Caco-2 (cell line): ENCODE measurements at regions of chr17 and their contacts with region 1.

Region 1: GRCh38 chr17:74987418-74987908 is at the start of gene CDR2L:
- DNase-seq: peak; percentile 95 to 98
- H3K4me3 ChIP-seq: peak within 1 kb of the TSS; percentile 70
- H3K4me3 Mint-ChIP-seq: peak within 1 kb of the TSS; percentile 81
- H3K27ac Mint-ChIP-seq: peak within 1 kb of the TSS; percentile 53
- H3K4me1 ChIP-seq: peaks cover 37% of the 10 kb centered on the region
- H3K4me1 Mint-ChIP-seq: peaks cover 23% of the 10 kb centered on the region
- H3K27me3 ChIP-seq: no peaks in the 10 kb centered on the region
- H3K27me3 Mint-ChIP-seq: no peaks in the 10 kb centered on the region
- CTCF ChIP-seq: no peak
- total RNA-seq, gene CDR2L: 30.9 and 31.6 TPM in 2 replicates

Region 2: GRCh38 chr17:74892974-74893911 is 94.2 kb before region 1 on chr17 and contains the start of gene FADS6:
- CTCF ChIA-PET with region 1: no interaction called
- POLR2A ChIA-PET with region 1: no interaction called
- intact Hi-C with region 1: no loop called
- DNase-seq: peak in 1 of 2 experiments; percentile 57
- H3K4me3 ChIP-seq: peak within 1 kb of the TSS; percentile 58
- H3K4me3 Mint-ChIP-seq: peak within 1 kb of the TSS; percentile 73
- H3K27ac Mint-ChIP-seq: no peak within 1 kb of the TSS
- H3K4me1 ChIP-seq: peaks cover 5% of the 10 kb centered on the region; the same call in 1 of the 2 replicates
- H3K4me1 Mint-ChIP-seq: peaks cover 9% of the 10 kb centered on the region
- H3K27me3 ChIP-seq: no peaks in the 10 kb centered on the region
- H3K27me3 Mint-ChIP-seq: peaks cover 6% of the 10 kb centered on the region
- CTCF ChIP-seq: no peak
- total RNA-seq, gene FADS6: 2.6 and 3.1 TPM in 2 replicates

Region 3: DNA sequence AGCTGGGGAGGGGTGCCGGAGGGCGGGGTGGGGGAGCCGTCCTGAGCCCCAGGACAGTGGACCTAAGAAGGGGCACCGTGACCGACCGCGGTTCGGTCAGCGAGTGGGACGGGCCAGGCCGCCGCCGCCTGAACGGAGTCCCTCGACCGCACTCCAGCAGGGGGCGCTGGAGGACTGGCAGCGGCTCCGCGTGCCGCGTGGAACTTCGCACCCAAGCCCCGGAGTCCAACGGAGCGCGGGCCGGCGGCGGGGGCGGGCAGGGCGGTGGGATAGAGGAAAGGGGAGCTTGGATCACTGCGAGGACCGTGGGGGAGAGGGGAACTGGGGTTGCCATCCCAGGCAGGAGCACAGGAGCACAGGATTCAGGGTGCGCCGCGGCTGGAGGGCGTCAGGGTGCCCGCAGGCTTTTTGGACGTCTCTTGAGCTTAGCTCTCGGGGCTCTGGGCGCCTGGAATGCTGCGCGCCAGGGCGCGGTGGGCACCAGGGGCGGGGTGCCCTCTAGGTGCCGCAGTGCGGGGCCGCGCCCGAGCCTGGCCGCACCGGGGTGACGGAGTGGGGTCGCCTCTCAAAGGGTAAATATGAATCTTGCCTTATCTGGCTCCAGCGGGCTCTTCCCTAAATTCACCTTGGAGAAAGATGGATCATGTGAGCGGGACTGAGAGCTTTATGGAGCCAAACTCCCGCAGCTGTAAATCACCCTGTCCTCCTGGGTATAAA is 63.8 kb before region 1 on chr17:
- CTCF ChIA-PET with region 1: no interaction called
- POLR2A ChIA-PET with region 1: interaction called, 13 read pairs
- intact Hi-C with region 1: no loop called
- DNase-seq: peak; percentile 62 to 89
- H3K4me3 ChIP-seq: peak overlapping the region; percentile 49
- H3K4me3 Mint-ChIP-seq: peak overlapping the region; percentile 71
- H3K27ac Mint-ChIP-seq: no peak overlapping the region
- H3K4me1 ChIP-seq: peaks cover 6% of the 10 kb centered on the region; the same call in 1 of the 2 replicates
- H3K4me1 Mint-ChIP-seq: no peaks in the 10 kb centered on the region
- H3K27me3 ChIP-seq: peaks cover 1% of the 10 kb centered on the region; the same call in 1 of the 2 replicates
- H3K27me3 Mint-ChIP-seq: peaks cover 25% of the 10 kb centered on the region
- CTCF ChIP-seq: peak; percentile 88 to 97

Region 4: GRCh38 chr17:74972107-74972972 is 15.1 kb before region 1 on chr17 and contains the start of gene HID1:
- CTCF ChIA-PET with region 1: interaction called, 11 read pairs
- POLR2A ChIA-PET with region 1: interaction called, 17 read pairs
- intact Hi-C with region 1: loop called (anchors 1 kb)
- DNase-seq: peak; percentile 75 to 87
- H3K4me3 ChIP-seq: peak within 1 kb of the TSS; percentile 90
- H3K4me3 Mint-ChIP-seq: peak within 1 kb of the TSS; percentile 84
- H3K27ac Mint-ChIP-seq: no peak within 1 kb of the TSS
- H3K4me1 ChIP-seq: peaks cover 36% of the 10 kb centered on the region
- H3K4me1 Mint-ChIP-seq: peaks cover 28% of the 10 kb centered on the region
- H3K27me3 ChIP-seq: no peaks in the 10 kb centered on the region
- H3K27me3 Mint-ChIP-seq: peaks cover 2% of the 10 kb centered on the region
- CTCF ChIP-seq: no peak
- total RNA-seq, gene HID1: 29.8 and 30.4 TPM in 2 replicates

Region 5: DNA sequence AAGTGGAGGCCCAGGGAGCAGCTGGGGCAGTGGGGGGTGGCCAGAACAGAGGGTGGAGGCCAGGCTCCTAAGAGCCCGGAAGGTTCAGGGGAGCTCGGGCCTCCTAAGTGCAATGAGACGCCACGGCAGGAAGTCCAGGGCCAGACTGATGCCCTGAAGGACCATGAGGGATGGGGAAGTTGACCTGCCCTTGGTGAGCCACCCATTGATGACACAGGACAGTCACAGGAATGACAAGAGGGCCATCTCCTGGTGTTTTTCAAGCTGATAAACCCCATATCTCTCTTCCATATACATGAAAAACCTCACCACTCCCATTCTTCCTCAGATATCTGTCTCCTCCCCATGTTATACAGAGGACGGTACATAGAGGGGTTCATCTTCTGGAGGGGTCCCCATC is 19.2 kb after region 1 on chr17:
- CTCF ChIA-PET with region 1: interaction called, 28 read pairs
- POLR2A ChIA-PET with region 1: interaction called, 33 read pairs
- intact Hi-C with region 1: loop called (anchors 1 kb)
- DNase-seq: peak in 1 of 2 experiments; percentile 46
- H3K4me3 ChIP-seq: no peak overlapping the region
- H3K4me3 Mint-ChIP-seq: no peak overlapping the region
- H3K27ac Mint-ChIP-seq: no peak overlapping the region
- H3K4me1 ChIP-seq: peaks cover 3% of the 10 kb centered on the region; the same call in 1 of the 2 replicates
- H3K4me1 Mint-ChIP-seq: no peaks in the 10 kb centered on the region
- H3K27me3 ChIP-seq: no peaks in the 10 kb centered on the region
- H3K27me3 Mint-ChIP-seq: no peaks in the 10 kb centered on the region
- CTCF ChIP-seq: peak in 1 of 2 experiments; percentile 33

Region 6: DNA sequence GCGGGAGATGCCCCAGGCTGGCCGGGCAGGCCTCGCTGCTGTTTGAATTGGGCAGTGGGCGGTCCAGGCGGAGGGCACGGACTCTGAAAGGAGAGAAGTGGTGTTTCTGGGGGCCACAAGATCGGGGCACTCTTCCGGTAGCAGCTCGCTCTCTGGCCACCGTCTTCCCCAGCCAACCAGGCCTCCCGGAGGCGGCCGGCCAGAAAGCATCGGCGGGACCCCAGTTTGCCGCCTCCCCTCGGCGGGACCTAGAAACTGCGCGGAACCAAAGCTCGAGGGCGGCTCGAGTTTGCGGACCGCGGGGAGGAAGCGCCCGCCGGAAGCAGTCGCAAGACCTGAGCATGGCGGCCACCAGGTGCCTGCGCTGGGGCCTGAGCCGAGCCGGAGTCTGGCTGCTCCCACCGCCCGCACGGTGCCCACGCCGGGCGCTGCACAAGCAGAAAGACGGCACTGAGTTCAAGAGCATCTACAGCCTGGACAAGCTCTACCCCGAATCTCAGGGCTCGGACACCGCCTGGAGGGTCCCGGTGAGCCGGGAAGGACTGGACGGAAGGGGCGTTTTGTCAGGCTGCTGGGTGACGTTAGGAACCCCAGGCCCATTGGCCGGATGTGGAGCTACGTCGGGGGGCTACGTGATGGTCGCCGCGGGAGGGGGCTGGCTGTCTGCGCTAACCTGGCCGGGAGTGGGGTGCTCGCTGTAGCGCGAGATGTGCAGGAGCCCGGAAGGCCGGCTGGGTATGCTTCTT is 25.1 kb after region 1 on chr17 and contains the start of gene MRPL58:
- CTCF ChIA-PET with region 1: interaction called, 28 read pairs
- POLR2A ChIA-PET with region 1: interaction called, 33 read pairs
- intact Hi-C with region 1: loop called (anchors 2 kb)
- DNase-seq: peak; percentile 88 to 92
- H3K4me3 ChIP-seq: peak within 1 kb of the TSS; percentile 84
- H3K4me3 Mint-ChIP-seq: peak within 1 kb of the TSS; percentile 82
- H3K27ac Mint-ChIP-seq: peak within 1 kb of the TSS; percentile 84
- H3K4me1 ChIP-seq: peaks cover 3% of the 10 kb centered on the region; the same call in 1 of the 2 replicates
- H3K4me1 Mint-ChIP-seq: peaks cover 29% of the 10 kb centered on the region
- H3K27me3 ChIP-seq: no peaks in the 10 kb centered on the region
- H3K27me3 Mint-ChIP-seq: no peaks in the 10 kb centered on the region
- CTCF ChIP-seq: peak; percentile 68 to 79
- total RNA-seq, gene MRPL58: 61.0 and 61.8 TPM in 2 replicates

Region 7: GRCh38 chr17:75034236-75034908 is 46.9 kb after region 1 on chr17:
- CTCF ChIA-PET with region 1: interaction called, 4 read pairs
- POLR2A ChIA-PET with region 1: interaction called, 8 read pairs
- intact Hi-C with region 1: loop called (anchors 1 kb)
- DNase-seq: peak; percentile 95 to 96
- H3K4me3 ChIP-seq: peak overlapping the region; percentile 91
- H3K4me3 Mint-ChIP-seq: peak overlapping the region; percentile 94
- H3K27ac Mint-ChIP-seq: peak overlapping the region; percentile 98
- H3K4me1 ChIP-seq: no peaks in the 10 kb centered on the region
- H3K4me1 Mint-ChIP-seq: peaks cover 30% of the 10 kb centered on the region
- H3K27me3 ChIP-seq: no peaks in the 10 kb centered on the region
- H3K27me3 Mint-ChIP-seq: peaks cover 4% of the 10 kb centered on the region
- CTCF ChIP-seq: peak; percentile 14 to 17

Region 8: DNA sequence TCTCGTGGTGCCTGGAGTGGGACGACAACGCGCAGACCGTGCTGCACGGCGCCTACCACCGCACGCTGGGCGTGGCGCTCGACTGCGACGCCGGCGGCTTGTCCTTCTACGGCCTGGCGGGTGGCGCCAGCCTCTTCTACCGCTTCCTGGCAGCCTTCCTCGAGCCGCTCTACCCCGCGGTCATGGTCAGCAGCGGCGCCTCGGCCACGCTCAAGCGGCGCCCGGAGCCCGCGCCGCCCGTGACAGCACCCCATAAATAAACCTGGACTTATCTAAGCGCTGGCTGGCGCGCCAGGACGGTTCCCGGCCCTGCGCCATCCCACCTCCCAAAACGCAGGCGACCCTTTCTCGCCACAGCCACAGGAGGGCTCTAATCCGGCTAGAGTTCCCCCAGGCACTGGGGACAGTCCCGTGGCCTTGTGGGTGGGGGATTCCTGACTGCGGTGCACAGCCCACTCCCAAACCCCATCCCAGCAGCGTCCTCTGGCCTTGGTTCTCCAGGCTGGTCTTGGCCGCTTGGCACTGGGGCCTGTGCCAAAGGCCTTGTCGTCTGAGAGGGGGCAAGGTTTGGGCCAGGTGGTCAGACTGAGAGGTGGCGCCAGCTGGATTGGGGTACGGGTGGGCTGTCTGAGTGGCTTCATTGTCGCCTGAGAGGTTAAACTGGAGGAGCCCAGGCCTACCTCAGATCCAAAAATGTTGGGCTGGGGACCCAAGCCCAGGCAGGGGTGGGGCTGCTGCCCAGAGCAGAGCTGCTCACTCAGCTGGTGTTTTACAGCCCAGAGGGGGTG is 90.2 kb after region 1 on chr17:
- CTCF ChIA-PET with region 1: no interaction called
- POLR2A ChIA-PET with region 1: no interaction called
- intact Hi-C with region 1: no loop called
- DNase-seq: peak; percentile 77 to 79
- H3K4me3 ChIP-seq: peak overlapping the region; percentile 54
- H3K4me3 Mint-ChIP-seq: peak overlapping the region; percentile 95
- H3K27ac Mint-ChIP-seq: peak overlapping the region; percentile 93
- H3K4me1 ChIP-seq: peaks cover 32% of the 10 kb centered on the region
- H3K4me1 Mint-ChIP-seq: peaks cover 22% of the 10 kb centered on the region
- H3K27me3 ChIP-seq: no peaks in the 10 kb centered on the region
- H3K27me3 Mint-ChIP-seq: no peaks in the 10 kb centered on the region
- CTCF ChIP-seq: peak in 1 of 2 experiments; percentile 55

Region 9: DNA sequence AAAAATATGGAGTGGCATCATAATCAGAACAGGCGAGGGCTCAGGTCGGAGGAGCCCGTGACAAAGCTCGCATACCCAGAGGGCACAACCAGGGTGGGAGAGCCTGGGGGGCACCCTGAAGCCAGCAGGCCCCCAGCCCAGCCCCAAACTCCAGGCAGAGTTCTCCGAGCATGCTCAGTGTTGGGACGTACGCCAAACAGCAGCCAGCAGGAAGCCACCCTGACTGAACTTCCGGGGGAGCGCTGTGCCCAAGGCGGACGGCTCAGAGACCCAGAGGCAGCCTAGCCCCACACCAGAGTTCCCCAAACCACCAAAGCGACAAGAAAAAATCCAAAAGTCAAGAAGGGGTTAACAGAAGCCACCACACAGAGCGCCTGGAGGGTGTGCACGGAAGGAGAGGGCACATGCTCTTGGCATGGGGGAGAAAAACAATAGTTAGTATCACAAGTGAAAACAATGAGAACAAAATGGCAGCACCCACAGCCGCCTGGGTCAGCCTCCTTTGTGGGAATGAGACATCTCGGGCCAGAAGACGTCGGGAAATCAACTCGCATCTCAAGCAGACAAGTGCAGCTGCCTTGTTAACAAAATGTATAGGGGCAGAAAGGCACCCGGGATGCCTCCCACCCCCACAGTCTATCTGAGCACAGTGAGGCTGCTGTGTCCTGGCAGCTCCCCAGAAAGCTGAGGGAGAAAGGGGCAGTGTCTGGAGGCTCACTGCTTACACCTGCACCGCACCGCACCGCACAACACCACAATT is 1104.2 kb after region 1 on chr17:
- CTCF ChIA-PET with region 1: no interaction called
- POLR2A ChIA-PET with region 1: no interaction called
- intact Hi-C with region 1: no loop called
- DNase-seq: no peak
- H3K4me3 ChIP-seq: no peak overlapping the region
- H3K4me3 Mint-ChIP-seq: no peak overlapping the region
- H3K27ac Mint-ChIP-seq: no peak overlapping the region
- H3K4me1 ChIP-seq: no peaks in the 10 kb centered on the region
- H3K4me1 Mint-ChIP-seq: no peaks in the 10 kb centered on the region
- H3K27me3 ChIP-seq: no peaks in the 10 kb centered on the region
- H3K27me3 Mint-ChIP-seq: no peaks in the 10 kb centered on the region
- CTCF ChIP-seq: no peak